Natural killer cell (primary cell): ENCODE measurements at regions of chr10 and their contacts with region 1.

Region 1: DNA sequence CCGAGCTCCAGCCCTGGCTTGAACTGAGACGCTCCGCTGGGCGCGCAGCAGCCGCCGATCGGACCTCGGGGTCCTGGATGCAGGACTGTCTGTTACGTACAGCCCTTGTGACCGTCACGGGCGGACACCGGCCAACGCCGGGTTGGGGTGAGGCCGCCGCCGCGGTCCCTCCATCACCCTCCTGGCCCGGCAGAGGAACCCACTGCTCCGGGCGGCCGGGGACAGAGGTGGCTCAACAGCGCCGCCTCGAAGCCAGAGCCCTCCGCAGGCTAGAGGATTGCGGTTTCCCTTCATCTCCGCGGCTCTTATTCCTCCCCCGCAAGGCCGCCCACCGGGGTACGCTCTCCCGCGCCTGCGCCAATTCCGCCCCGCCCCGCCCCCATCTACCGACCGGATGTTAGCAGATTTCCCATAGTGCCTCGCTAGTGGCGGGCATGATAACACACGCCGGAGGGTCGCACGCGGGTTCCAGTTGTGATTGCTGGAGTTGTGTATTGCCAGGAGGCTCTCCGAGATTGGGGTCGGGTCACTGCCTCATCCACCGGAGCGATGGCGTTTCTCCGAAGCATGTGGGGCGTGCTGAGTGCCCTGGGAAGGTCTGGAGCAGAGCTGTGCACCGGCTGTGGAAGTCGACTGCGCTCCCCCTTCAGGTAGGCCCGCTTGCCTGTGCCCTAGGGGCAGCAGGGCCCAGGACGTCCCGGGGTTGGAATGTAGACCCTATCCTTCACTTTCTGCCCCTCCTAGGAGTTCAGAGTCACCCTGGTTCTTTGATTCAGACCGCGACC is at the start of gene TFAM:
- DNase-seq: peak; percentile 94 to 95
- ATAC-seq: peak; percentile 89 to 95 (median 92)
- H3K4me3 ChIP-seq: peak within 1 kb of the TSS; percentile 96
- H3K4me3 Mint-ChIP-seq: peak within 1 kb of the TSS; percentile 94
- H3K27ac ChIP-seq: peak within 1 kb of the TSS; percentile 84
- H3K27ac Mint-ChIP-seq: peak within 1 kb of the TSS; percentile 88 to 94
- H3K4me1 ChIP-seq: peaks cover 15% of the 10 kb centered on the region
- H3K4me1 Mint-ChIP-seq: peaks cover 45 to 50% of the 10 kb centered on the region in 2 donors
- H3K27me3 ChIP-seq: no peaks in the 10 kb centered on the region
- H3K27me3 Mint-ChIP-seq: peaks cover 0 to 4% of the 10 kb centered on the region in 2 donors
- CTCF ChIP-seq: peak; percentile 65
- total RNA-seq, gene TFAM: 29.1 to 34.3 (median 33.8) TPM

Region 2: DNA sequence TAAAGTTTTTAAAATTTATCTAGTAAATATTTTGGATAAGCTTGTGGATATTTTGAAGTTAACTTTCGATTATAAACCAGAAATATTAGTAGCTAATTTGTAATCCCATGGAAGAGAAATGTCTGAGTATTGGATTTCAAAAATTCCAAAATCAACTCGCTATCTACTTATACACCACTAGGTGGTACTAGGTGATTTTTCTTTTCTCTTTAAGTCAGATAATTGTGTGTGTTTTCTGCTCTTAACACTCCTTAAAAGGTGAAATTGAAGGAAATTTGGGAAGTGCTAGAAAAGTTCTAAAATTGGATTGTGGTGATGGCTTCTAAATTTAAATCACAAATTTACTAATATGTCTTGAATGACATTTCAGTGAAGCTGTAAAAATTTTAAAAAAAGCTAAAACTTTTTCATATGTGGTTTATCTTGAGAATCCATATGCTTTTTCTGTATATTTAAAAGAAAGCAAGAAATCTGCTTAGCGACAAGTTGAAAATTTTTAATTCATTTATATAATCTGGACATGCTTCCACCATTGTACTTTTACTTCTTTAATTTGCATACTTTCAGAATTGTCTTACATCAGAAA is 207.7 kb before region 1 on chr10:
- intact Hi-C with region 1: loop called (anchors 10 kb)
- DNase-seq: peak in 1 of 2 donors; percentile 49
- ATAC-seq: no peak
- H3K4me3 ChIP-seq: no peak overlapping the region
- H3K4me3 Mint-ChIP-seq: no peak overlapping the region
- H3K27ac ChIP-seq: no peak overlapping the region
- H3K27ac Mint-ChIP-seq: no peak overlapping the region
- H3K4me1 ChIP-seq: no peaks in the 10 kb centered on the region
- H3K4me1 Mint-ChIP-seq: no peaks in the 10 kb centered on the region
- H3K27me3 ChIP-seq: no peaks in the 10 kb centered on the region
- H3K27me3 Mint-ChIP-seq: peaks cover 0 to 10% of the 10 kb centered on the region in 2 donors
- CTCF ChIP-seq: peak; percentile 66

Region 3: DNA sequence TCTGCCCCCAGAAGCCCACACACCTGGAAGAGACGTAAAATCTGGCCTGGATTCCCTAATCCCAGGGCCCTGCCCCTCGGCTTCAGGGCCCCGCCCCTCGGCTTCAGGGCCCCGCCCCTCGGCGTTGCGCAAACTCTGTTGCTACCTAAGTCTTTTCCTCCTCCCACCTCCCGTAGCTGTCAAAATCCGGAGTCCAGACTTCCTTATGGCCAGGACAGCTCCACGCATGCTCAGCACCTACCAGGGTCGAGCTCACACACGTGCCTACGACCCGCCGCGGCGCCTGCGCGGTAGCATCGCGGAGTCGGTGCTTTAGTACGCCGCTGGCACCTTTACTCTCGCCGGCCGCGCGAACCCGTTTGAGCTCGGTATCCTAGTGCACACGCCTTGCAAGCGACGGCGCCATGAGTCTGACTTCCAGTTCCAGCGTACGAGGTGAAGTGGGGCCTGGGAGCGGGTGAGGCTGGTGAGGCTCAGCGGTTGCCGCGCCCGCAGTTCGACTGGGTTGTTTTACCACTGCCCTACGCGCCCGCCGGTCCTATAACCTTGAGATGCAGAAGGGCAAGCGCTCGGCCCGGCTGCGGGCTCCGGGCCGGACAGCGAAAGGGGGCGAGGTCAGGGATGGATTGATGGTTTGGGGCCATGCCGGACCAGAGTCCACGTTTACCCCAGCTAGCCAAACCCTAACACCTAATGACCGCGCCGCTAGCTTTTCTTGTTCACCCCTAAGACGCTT is 116.2 kb before region 1 on chr10 and contains the start of gene CISD1:
- intact Hi-C with region 1: loop called (anchors 1 kb)
- DNase-seq: peak; percentile 82 to 100
- ATAC-seq: peak; percentile 54 to 71 (median 69)
- H3K4me3 ChIP-seq: peak within 1 kb of the TSS; percentile 68
- H3K4me3 Mint-ChIP-seq: peak within 1 kb of the TSS; percentile 96
- H3K27ac ChIP-seq: peak within 1 kb of the TSS; percentile 90
- H3K27ac Mint-ChIP-seq: peak within 1 kb of the TSS; percentile 96 to 99
- H3K4me1 ChIP-seq: peaks cover 21% of the 10 kb centered on the region
- H3K4me1 Mint-ChIP-seq: peaks cover 50 to 52% of the 10 kb centered on the region in 2 donors
- H3K27me3 ChIP-seq: no peaks in the 10 kb centered on the region
- H3K27me3 Mint-ChIP-seq: no peaks in the 10 kb centered on the region
- CTCF ChIP-seq: no peak
- total RNA-seq, gene CISD1: 4.2 to 10.4 (median 5.3) TPM

Region 4: DNA sequence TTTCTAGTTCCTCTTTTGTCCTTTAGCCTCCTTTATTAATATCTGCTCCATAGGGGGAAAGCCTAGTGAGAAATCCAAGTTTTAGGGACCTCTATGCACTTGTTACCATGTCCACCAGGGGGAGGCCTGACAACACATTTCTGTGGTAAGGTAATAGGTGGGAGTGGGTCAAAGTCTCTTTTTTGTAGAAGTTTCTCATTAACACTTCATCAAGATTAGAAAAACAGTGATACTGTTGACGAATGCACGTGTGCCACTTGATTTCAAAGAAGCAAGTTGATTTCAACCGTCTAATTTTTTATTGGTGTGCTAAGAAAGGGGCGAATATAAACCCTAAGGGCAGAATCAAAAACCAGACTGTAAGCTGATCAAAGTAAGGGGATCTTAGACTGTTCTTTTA is 85.6 kb before region 1 on chr10:
- intact Hi-C with region 1: loop called (anchors 1 kb)
- DNase-seq: peak; percentile 18 to 82
- ATAC-seq: peak; percentile 53 to 79 (median 78)
- H3K4me3 ChIP-seq: no peak overlapping the region
- H3K4me3 Mint-ChIP-seq: no peak overlapping the region
- H3K27ac ChIP-seq: no peak overlapping the region
- H3K27ac Mint-ChIP-seq: no peak overlapping the region
- H3K4me1 ChIP-seq: no peaks in the 10 kb centered on the region
- H3K4me1 Mint-ChIP-seq: no peaks in the 10 kb centered on the region
- H3K27me3 ChIP-seq: peaks cover 3% of the 10 kb centered on the region
- H3K27me3 Mint-ChIP-seq: peaks cover 0 to 12% of the 10 kb centered on the region in 2 donors
- CTCF ChIP-seq: peak; percentile 78

Region 5: GRCh38 chr10:58334817-58335305 is 50.3 kb before region 1 on chr10 and contains the start of gene UBE2D1:
- intact Hi-C with region 1: loop called (anchors 2 kb)
- DNase-seq: peak; percentile 47 to 83
- ATAC-seq: peak; percentile 93 to 94 (median 93)
- H3K4me3 ChIP-seq: peak within 1 kb of the TSS; percentile 64
- H3K4me3 Mint-ChIP-seq: peak within 1 kb of the TSS; percentile 95
- H3K27ac ChIP-seq: peak within 1 kb of the TSS; percentile 33
- H3K27ac Mint-ChIP-seq: peak within 1 kb of the TSS; percentile 78 to 81
- H3K4me1 ChIP-seq: peaks cover 9% of the 10 kb centered on the region
- H3K4me1 Mint-ChIP-seq: peaks cover 10 to 26% of the 10 kb centered on the region in 2 donors
- H3K27me3 ChIP-seq: no peaks in the 10 kb centered on the region
- H3K27me3 Mint-ChIP-seq: peaks cover 10 to 11% of the 10 kb centered on the region in 2 donors
- CTCF ChIP-seq: no peak
- total RNA-seq, gene UBE2D1: 14.0 to 14.5 (median 14.4) TPM